GM18951 (cell line): ENCODE measurements at regions of chr11 and their contacts with region 1.

Region 1: GRCh38 chr11:85595285-85595884 is 31.8 kb downstream of the DLG2 start:
- POLR2A ChIP-seq: no peak

Region 2: GRCh38 chr11:84558085-84558905 is 1037.1 kb before region 1 on chr11:
- in situ Hi-C with region 1: loop called (anchors 25 kb)
- POLR2A ChIP-seq: no peak

Region 3: GRCh38 chr11:85826116-85826855 is 230.9 kb after region 1 on chr11:
- in situ Hi-C with region 1: loop called (anchors 25 kb)
- POLR2A ChIP-seq: no peak

Region 4: DNA sequence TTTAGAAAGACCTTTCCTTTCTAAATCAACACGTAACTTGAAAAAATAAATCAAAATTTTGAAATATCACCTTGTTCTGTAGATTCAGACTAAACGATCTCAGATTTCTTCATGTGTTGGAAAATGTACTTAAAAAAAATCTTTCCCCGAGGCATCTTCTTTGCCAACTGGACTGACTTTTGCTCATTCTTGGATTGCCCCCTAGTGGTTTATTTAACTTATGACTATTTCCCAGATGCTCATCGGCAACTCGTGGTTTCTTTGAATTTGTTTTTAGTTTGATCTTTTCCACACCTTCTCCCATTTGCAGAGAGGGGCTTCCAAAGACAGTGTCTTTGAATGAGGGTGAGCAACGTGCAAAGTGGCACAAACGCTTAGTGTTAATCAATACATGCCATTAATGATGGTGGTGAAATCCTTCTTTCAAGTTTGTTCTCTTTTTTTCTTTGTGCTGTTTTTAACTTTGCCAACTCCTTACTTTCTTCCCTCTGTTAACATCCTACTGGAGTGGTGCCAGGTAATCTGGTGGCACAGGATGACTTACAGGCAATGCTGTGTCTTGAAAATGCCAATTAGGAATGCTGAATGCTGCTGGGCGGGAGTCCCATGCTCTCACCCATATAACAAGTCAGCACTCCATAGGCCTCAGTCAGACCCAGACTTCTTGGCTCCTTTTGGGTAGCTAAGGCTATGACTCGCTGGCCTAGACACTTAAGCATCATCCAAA is 1223.2 kb after region 1 on chr11:
- in situ Hi-C with region 1: loop called (anchors 25 kb)
- POLR2A ChIP-seq: no peak